Panc1 (cell line): ENCODE measurements at regions of chr2 and their contacts with region 1.

Region 1: GRCh38 chr2:100277540-100278207 is 44.6 kb downstream of the LONRF2 start:
- DNase-seq: no peak
- ATAC-seq: no peak
- H3K4me3 ChIP-seq: no peak overlapping the region
- H3K27ac ChIP-seq: no peak overlapping the region
- H3K4me1 ChIP-seq: no peaks in the 10 kb centered on the region
- H3K27me3 ChIP-seq: no peaks in the 10 kb centered on the region
- CTCF ChIP-seq: no peak

Region 2: DNA sequence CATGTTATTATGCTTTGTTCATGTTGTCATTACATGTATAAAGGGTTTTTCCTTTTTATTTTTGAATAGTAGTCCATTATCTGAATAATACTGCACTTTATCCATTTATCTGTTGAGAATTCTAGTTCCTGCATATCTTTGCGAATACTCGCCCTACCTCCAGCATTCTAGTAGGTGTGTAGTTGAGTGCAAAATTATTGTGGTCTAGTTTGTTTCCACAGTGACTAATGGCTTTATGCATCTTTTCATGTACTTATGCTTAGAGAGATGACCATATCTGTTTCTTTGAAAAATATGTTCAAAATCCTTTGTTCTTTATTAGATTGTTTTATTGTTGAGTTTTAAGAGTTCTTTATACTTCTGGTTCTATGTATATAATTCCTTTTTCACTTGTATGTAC is 891.7 kb before region 1 on chr2:
- CTCF ChIA-PET with region 1: no interaction called
- POLR2A ChIA-PET with region 1: interaction called, 11 read pairs
- in situ Hi-C with region 1: no loop called
- intact Hi-C with region 1: no loop called
- DNase-seq: no peak
- ATAC-seq: no peak
- H3K4me3 ChIP-seq: no peak overlapping the region
- H3K27ac ChIP-seq: no peak overlapping the region
- H3K4me1 ChIP-seq: no peaks in the 10 kb centered on the region
- H3K27me3 ChIP-seq: no peaks in the 10 kb centered on the region
- CTCF ChIP-seq: no peak